CD8-positive, alpha-beta T cell (primary cell): ENCODE measurements at regions of chr3 and their contacts with region 1.

Region 1: GRCh38 chr3:141441381-141442364 is 45.2 kb upstream of the RASA2 start:
- DNase-seq: peak; percentile 63 to 85 (median 75)
- ATAC-seq: peak; percentile 100
- H3K4me3 ChIP-seq: no peak overlapping the region
- H3K4me3 Mint-ChIP-seq: peak overlapping the region; percentile 39
- H3K27ac ChIP-seq: peak overlapping the region in 1 of 2 experiments; percentile 64
- H3K27ac Mint-ChIP-seq: peak overlapping the region; percentile 83
- H3K4me1 ChIP-seq: peaks cover 9% of the 10 kb centered on the region
- H3K4me1 Mint-ChIP-seq: peaks cover 38% of the 10 kb centered on the region
- H3K27me3 ChIP-seq: no peaks in the 10 kb centered on the region
- H3K27me3 Mint-ChIP-seq: no peaks in the 10 kb centered on the region
- CTCF ChIP-seq: peak; percentile 88

Region 2: DNA sequence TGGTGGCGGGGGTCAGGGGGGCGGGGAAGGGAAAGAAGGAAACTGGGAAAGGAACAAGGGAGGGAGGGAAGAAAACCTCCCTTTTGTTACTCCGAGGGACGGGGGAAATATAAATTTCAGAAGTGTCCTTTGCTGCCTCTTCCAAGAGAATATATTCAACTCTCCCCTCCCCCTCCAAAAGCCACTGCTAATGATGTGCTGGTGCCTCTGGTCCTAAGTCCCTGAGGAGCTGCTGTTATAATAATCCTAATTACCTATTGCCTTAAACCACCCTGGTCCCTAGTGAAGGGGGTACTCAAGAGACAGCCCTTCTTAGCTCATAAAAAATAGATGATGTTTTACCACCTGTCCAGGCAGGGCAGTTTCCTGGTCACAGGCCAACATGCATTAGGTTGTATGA is 882.1 kb before region 1 on chr3:
- CTCF ChIA-PET with region 1: no interaction called
- POLR2A ChIA-PET with region 1: no interaction called
- intact Hi-C with region 1: no loop called
- DNase-seq: no peak
- ATAC-seq: no peak
- H3K4me3 ChIP-seq: no peak overlapping the region
- H3K4me3 Mint-ChIP-seq: no peak overlapping the region
- H3K27ac ChIP-seq: no peak overlapping the region
- H3K27ac Mint-ChIP-seq: no peak overlapping the region
- H3K4me1 ChIP-seq: no peaks in the 10 kb centered on the region
- H3K4me1 Mint-ChIP-seq: no peaks in the 10 kb centered on the region
- H3K27me3 ChIP-seq: no peaks in the 10 kb centered on the region
- H3K27me3 Mint-ChIP-seq: peaks cover 6% of the 10 kb centered on the region
- CTCF ChIP-seq: no peak

Region 3: GRCh38 chr3:141303481-141304223 is 138.0 kb before region 1 on chr3:
- CTCF ChIA-PET with region 1: interaction called, 56 read pairs
- POLR2A ChIA-PET with region 1: interaction called, 5 read pairs
- intact Hi-C with region 1: loop called (anchors 1 kb)
- DNase-seq: peak in 8 of 9 experiments; percentile 40 to 85 (median 64)
- ATAC-seq: peak; percentile 56
- H3K4me3 ChIP-seq: no peak overlapping the region
- H3K4me3 Mint-ChIP-seq: no peak overlapping the region
- H3K27ac ChIP-seq: no peak overlapping the region
- H3K27ac Mint-ChIP-seq: no peak overlapping the region
- H3K4me1 ChIP-seq: peaks cover 60% of the 10 kb centered on the region
- H3K4me1 Mint-ChIP-seq: peaks cover 66% of the 10 kb centered on the region
- H3K27me3 ChIP-seq: no peaks in the 10 kb centered on the region
- H3K27me3 Mint-ChIP-seq: no peaks in the 10 kb centered on the region
- CTCF ChIP-seq: peak; percentile 85

Region 4: GRCh38 chr3:141370065-141370533 is 71.6 kb before region 1 on chr3:
- CTCF ChIA-PET with region 1: interaction called, 37 read pairs
- POLR2A ChIA-PET with region 1: interaction called, 3 read pairs
- intact Hi-C with region 1: loop called (anchors 1 kb)
- DNase-seq: peak; percentile 15 to 94 (median 54)
- ATAC-seq: peak; percentile 100
- H3K4me3 ChIP-seq: no peak overlapping the region
- H3K4me3 Mint-ChIP-seq: no peak overlapping the region
- H3K27ac ChIP-seq: no peak overlapping the region
- H3K27ac Mint-ChIP-seq: no peak overlapping the region
- H3K4me1 ChIP-seq: no peaks in the 10 kb centered on the region
- H3K4me1 Mint-ChIP-seq: peaks cover 9% of the 10 kb centered on the region
- H3K27me3 ChIP-seq: no peaks in the 10 kb centered on the region
- H3K27me3 Mint-ChIP-seq: no peaks in the 10 kb centered on the region
- CTCF ChIP-seq: peak; percentile 62

Region 5: DNA sequence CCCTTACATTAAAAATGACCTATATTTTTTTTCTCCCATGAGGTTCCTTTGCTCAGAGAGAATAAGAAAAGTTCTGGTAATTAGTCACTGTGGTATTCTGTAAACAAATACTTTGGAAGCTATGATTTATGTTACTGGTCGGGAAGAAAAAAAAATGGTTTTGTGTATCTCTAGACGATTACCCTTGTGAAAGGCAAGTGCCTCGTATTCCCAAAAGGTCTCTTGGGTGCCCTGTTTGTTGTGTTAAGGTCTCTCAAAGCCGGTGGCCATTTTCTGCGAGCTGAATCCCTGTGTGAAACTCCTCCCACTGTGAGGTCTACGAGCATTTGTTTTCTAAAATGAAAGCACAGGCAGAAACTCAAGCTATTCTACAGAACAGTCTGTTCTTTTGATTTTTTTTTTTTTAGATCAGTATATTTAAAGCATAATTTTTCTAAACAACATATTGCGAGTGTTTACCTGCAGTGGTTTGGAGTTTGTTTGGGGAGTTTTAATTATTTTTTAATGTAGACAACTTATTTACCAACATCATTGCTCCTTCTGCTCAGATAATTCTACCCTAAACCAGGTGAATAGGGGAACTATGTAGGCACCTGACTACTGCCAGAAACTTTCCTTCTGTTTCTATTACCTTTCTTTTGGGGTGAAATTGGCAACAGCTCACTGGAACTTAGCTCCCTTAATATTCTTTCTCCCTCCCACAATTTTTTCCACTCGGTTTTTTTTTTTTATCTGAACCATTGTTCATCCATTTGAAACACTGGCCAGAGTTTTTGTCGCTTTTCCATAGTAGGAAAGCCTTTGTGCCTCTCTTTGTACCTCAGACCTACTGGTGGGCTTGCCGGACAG is 29.4 kb before region 1 on chr3:
- CTCF ChIA-PET with region 1: interaction called, 9 read pairs
- POLR2A ChIA-PET with region 1: interaction called, 4 read pairs
- intact Hi-C with region 1: loop called in 1 of 2 experiments (anchors 2 kb)
- DNase-seq: peak; percentile 27 to 88 (median 55)
- ATAC-seq: peak; percentile 64
- H3K4me3 ChIP-seq: peak overlapping the region; percentile 16 to 24
- H3K4me3 Mint-ChIP-seq: peak overlapping the region; percentile 84
- H3K27ac ChIP-seq: peak overlapping the region; percentile 61 to 80
- H3K27ac Mint-ChIP-seq: peak overlapping the region; percentile 99
- H3K4me1 ChIP-seq: peaks cover 78% of the 10 kb centered on the region
- H3K4me1 Mint-ChIP-seq: peaks cover 86% of the 10 kb centered on the region
- H3K27me3 ChIP-seq: no peaks in the 10 kb centered on the region
- H3K27me3 Mint-ChIP-seq: no peaks in the 10 kb centered on the region
- CTCF ChIP-seq: no peak

Region 6: GRCh38 chr3:141452036-141452435 is 10.4 kb after region 1 on chr3:
- CTCF ChIA-PET with region 1: interaction called, 89 read pairs
- POLR2A ChIA-PET with region 1: no interaction called
- intact Hi-C with region 1: no loop called
- DNase-seq: peak in 5 of 9 experiments; percentile 28 to 77 (median 55)
- ATAC-seq: peak; percentile 88
- H3K4me3 ChIP-seq: no peak overlapping the region
- H3K4me3 Mint-ChIP-seq: no peak overlapping the region
- H3K27ac ChIP-seq: peak overlapping the region in 1 of 2 experiments; percentile 51
- H3K27ac Mint-ChIP-seq: no peak overlapping the region
- H3K4me1 ChIP-seq: peaks cover 15% of the 10 kb centered on the region
- H3K4me1 Mint-ChIP-seq: peaks cover 7% of the 10 kb centered on the region
- H3K27me3 ChIP-seq: no peaks in the 10 kb centered on the region
- H3K27me3 Mint-ChIP-seq: peaks cover 2% of the 10 kb centered on the region
- CTCF ChIP-seq: peak; percentile 55